PC-3 (cell line): ENCODE measurements at regions of chr3 and their contacts with region 1.

Region 1: DNA sequence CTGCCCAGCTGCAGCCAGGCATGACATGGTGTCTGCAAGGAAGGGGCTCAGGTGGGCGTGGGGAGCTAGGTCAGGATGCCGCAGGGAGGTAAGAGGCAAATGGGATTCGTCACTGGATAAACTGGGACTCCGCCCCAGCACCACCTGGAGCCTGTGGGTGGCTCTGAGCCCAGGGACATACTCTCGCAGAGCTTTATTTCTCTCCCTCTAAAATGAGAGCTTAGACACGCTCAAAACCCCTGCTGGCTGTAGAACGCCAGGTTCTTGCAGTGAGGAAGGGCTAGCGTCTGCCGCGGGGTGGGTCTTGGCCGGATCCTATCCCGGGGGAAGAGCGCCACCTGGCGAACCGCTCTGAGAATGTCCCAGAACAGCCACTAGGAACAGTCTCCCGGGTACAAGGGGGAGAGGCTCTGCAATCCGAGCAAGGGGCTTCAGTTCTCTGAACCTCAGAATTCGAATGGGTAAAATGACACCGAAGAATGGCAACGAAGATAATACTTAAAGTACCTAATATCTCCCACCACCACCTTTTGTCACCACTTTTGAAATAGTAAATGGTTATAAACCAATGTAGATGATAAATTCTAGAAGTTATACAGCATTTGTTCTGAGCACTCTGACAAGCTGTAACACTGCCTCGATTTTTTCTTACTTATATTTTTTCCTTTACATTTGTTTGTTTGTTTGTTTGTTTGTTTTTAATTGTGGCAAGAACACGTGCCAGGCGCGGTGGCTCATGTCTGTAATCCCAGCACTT is 53.2 kb upstream of the SRGAP3 start:
- DNase-seq: peak; percentile 95
- ATAC-seq: peak; percentile 94
- H3K4me3 ChIP-seq: peak overlapping the region; percentile 66
- H3K27ac ChIP-seq: peak overlapping the region; percentile 70
- H3K4me1 ChIP-seq: peaks cover 13% of the 10 kb centered on the region
- H3K27me3 ChIP-seq: no peaks in the 10 kb centered on the region
- CTCF ChIP-seq: peak; percentile 97

Region 2: GRCh38 chr3:8970971-8971589 is 331.5 kb before region 1 on chr3:
- CTCF ChIA-PET with region 1: interaction called, 13 read pairs
- POLR2A ChIA-PET with region 1: interaction called, 3 read pairs
- intact Hi-C with region 1: loop called (anchors 1 kb)
- DNase-seq: peak; percentile 86
- ATAC-seq: peak; percentile 72
- H3K4me3 ChIP-seq: no peak overlapping the region
- H3K27ac ChIP-seq: no peak overlapping the region
- H3K4me1 ChIP-seq: peaks cover under 1% of the 10 kb centered on the region; the same call in 1 of the 2 replicates
- H3K27me3 ChIP-seq: no peaks in the 10 kb centered on the region
- CTCF ChIP-seq: peak; percentile 95

Region 3: GRCh38 chr3:9033867-9034266 is 268.7 kb before region 1 on chr3:
- CTCF ChIA-PET with region 1: no interaction called
- POLR2A ChIA-PET with region 1: no interaction called
- intact Hi-C with region 1: loop called (anchors 1 kb)
- DNase-seq: peak; percentile 37
- ATAC-seq: peak; percentile 63
- H3K4me3 ChIP-seq: no peak overlapping the region
- H3K27ac ChIP-seq: no peak overlapping the region
- H3K4me1 ChIP-seq: no peaks in the 10 kb centered on the region
- H3K27me3 ChIP-seq: no peaks in the 10 kb centered on the region
- CTCF ChIP-seq: peak; percentile 53

Region 4: DNA sequence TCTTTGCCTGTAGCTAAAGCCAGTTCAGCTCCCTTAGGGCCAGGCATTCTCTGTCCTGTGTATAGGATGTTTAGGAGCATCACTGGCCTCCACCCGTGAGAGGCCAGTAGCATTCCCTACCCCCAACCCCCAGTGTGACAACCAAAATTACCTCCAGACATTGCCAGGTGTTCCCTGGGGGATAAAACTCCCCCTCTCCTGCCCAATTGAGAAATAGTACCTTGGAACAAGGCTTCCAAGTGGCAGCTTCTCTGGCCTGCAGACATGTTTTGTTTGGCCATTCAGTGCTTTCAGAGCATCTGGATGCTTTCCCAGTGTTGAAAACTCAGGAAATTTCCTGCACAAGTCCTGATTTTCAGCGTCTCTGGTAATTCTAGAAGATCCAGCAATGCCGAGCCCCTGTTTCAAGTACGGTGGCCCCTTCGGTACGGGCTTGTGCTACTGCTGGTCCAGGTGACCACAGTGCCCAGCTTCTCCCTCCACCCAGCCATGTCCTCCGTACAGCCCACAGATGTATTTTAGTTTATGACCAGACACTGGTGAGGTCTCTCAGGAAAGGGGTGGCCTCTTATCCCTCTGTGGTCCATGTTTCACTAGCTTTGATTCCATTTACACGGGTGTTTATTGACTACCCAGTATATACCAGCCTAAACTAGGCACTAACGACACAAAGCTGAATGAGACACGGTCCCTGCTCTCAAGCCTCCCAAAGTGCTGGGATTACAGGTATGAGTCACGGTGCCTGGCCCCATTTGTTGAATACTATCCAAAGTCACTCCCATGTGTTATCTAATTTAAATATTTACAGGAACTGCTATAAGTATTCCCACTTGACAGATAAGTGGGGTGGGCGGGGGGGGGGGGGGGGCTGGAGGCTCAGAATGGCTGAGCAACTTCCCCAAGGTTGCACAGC is 213.9 kb before region 1 on chr3:
- CTCF ChIA-PET with region 1: no interaction called
- POLR2A ChIA-PET with region 1: no interaction called
- intact Hi-C with region 1: loop called (anchors 5 kb)
- DNase-seq: peak; percentile 71
- ATAC-seq: peak; percentile 95
- H3K4me3 ChIP-seq: no peak overlapping the region
- H3K27ac ChIP-seq: no peak overlapping the region
- H3K4me1 ChIP-seq: peaks cover 4% of the 10 kb centered on the region
- H3K27me3 ChIP-seq: no peaks in the 10 kb centered on the region
- CTCF ChIP-seq: no peak

Region 5: DNA sequence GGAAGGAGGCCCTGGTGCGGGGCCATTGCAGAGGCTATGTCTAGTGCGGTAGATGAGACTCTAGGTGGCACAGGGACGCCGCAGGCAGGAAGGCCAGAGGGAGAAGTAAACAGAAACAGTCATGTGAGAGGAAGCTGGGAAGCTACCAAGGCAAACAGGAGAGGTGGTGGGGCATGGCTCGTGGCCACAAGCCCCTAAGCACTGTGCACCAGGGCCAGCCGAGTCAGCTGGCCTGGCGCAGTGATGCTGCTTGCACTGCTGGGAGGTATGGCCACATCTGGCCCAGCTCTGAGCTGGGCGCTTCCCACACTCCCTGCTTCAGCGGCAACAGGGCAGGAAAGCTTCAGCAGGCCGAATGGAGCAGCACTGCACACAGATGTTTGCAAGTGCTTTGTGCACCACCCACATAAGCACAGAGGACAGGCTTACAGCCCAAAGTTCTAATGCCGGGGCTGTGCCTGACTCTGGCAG is 129.7 kb before region 1 on chr3:
- CTCF ChIA-PET with region 1: interaction called, 17 read pairs
- POLR2A ChIA-PET with region 1: no interaction called
- intact Hi-C with region 1: loop called (anchors 1 kb)
- DNase-seq: peak; percentile 87
- ATAC-seq: peak; percentile 78
- H3K4me3 ChIP-seq: no peak overlapping the region
- H3K27ac ChIP-seq: peak overlapping the region; percentile 8; the same call in 1 of the 2 replicates
- H3K4me1 ChIP-seq: peaks cover 32% of the 10 kb centered on the region
- H3K27me3 ChIP-seq: no peaks in the 10 kb centered on the region
- CTCF ChIP-seq: peak; percentile 48; the same call in 1 of the 2 replicates

Region 6: GRCh38 chr3:9316881-9317361 is 14.3 kb after region 1 on chr3:
- CTCF ChIA-PET with region 1: interaction called, 13 read pairs
- POLR2A ChIA-PET with region 1: no interaction called
- intact Hi-C with region 1: no loop called
- DNase-seq: no peak
- ATAC-seq: peak; percentile 53
- H3K4me3 ChIP-seq: no peak overlapping the region
- H3K27ac ChIP-seq: no peak overlapping the region
- H3K4me1 ChIP-seq: peaks cover 12% of the 10 kb centered on the region; the same call in 1 of the 2 replicates
- H3K27me3 ChIP-seq: no peaks in the 10 kb centered on the region
- CTCF ChIP-seq: no peak